ENCODE measurements at regions of chr7 and their contacts with region 1.

Region 1: GRCh38 chr7:117458977-117459583 is 20.7 kb upstream of the CFTR start:
- DNase-seq: peak in 3 of 4 experiments; percentile 38 to 39 (median 39)
- ATAC-seq: peak; percentile 76
- H3K4me3 ChIP-seq: no peak overlapping the region
- H3K27ac ChIP-seq: no peak overlapping the region
- H3K4me1 ChIP-seq: no peaks in the 10 kb centered on the region
- H3K27me3 ChIP-seq: no peaks in the 10 kb centered on the region
- CTCF ChIP-seq: peak; percentile 41 to 67 (median 46); a peak in 4 of 6 replicates
- EP300 ChIP-seq: no peak
- POLR2A ChIP-seq: no peak
- RAD21 ChIP-seq: peak; percentile 75 to 76

Region 2: DNA sequence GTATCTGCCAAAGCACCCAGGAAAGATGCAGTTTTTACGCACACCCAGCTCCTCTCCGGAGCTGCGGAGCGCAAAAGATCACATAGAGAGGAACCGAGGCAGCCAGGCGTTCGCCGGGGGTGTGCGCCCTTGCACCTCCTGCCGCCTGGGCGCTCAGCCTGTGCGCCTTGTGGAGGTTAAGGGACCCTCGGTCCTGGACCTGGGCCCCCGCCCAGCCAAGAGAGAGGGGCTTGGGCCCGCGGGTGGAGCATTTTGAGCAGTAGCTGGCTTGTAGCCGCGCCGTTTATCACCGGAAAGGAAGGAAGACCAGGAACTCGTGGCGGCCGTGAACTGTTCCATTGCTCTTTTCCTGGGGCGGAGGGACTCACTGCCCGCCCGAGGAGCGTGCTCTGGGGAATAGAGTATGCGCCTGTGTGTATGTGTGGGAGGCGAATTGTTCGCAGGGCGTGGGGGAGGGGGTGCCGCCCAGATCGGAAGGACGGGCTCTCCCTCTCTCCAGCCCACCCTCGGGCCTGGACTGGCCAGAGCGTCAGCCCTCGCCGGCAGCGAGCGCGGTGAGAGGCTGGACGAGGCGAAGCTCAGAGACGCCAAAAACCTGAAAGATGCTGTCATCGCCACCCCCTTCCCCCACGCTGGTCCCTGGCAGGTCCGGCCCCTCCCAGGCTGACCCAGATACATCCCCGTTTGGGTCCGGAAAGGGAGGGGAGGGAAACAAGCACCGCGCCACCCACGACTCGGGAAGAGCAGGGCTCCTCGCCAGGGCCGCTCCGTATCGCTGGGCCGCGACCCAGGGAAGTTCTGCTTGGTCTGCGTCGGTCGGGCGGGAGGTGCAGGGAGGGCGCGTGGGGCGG is 135.0 kb before region 1 on chr7:
- CTCF ChIA-PET with region 1: no interaction called
- POLR2A ChIA-PET with region 1: no interaction called
- in situ Hi-C with region 1: no loop called
- intact Hi-C with region 1: no loop called
- DNase-seq: no peak
- ATAC-seq: peak; percentile 52
- H3K4me3 ChIP-seq: no peak overlapping the region
- H3K27ac ChIP-seq: no peak overlapping the region
- H3K4me1 ChIP-seq: peaks cover 0 to 16% of the 10 kb centered on the region in 2 experiments; a peak in 2 of 5 replicates
- H3K27me3 ChIP-seq: peaks cover 43 to 44% of the 10 kb centered on the region in 2 experiments; a peak in 4 of 5 replicates
- CTCF ChIP-seq: no peak
- EP300 ChIP-seq: no peak
- POLR2A ChIP-seq: no peak
- RAD21 ChIP-seq: no peak

Region 3: GRCh38 chr7:117715784-117716445 is 256.8 kb after region 1 on chr7:
- CTCF ChIA-PET with region 1: interaction called, 5 read pairs
- POLR2A ChIA-PET with region 1: no interaction called
- in situ Hi-C with region 1: no loop called
- intact Hi-C with region 1: loop called (anchors 5 kb)
- DNase-seq: peak in 3 of 4 experiments; percentile 29 to 38 (median 31)
- ATAC-seq: peak; percentile 75
- H3K4me3 ChIP-seq: no peak overlapping the region
- H3K27ac ChIP-seq: no peak overlapping the region
- H3K4me1 ChIP-seq: no peaks in the 10 kb centered on the region; a peak in 1 of 5 replicates
- H3K27me3 ChIP-seq: peaks cover 0 to 3% of the 10 kb centered on the region in 2 experiments; a peak in 2 of 5 replicates
- CTCF ChIP-seq: peak; percentile 38 to 63 (median 47)
- EP300 ChIP-seq: no peak
- POLR2A ChIP-seq: no peak
- RAD21 ChIP-seq: peak; percentile 59 to 60

Region 4: DNA sequence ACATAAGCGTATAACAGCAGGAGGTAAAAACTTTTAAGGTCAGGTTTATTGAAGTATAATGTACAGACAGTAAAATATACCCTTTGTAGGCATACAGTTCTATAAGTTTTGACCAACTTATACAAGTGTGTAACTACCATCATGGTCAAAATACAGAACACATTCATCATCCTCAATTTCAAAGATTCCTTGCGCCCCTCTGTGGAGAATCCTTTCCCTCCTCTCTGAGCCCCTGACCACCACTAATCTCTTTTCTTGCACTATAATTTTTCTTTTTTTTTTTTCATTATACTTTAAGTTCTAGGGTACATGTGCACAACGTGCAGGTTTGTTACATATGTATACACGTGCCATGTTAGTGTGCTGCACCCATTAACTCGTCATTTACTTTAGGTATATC is 472.2 kb after region 1 on chr7:
- CTCF ChIA-PET with region 1: no interaction called
- POLR2A ChIA-PET with region 1: no interaction called
- in situ Hi-C with region 1: no loop called
- intact Hi-C with region 1: loop called (anchors 5 kb)
- DNase-seq: no peak
- ATAC-seq: peak; percentile 48; the same call in 2 of the 3 replicates
- H3K4me3 ChIP-seq: no peak overlapping the region
- H3K27ac ChIP-seq: no peak overlapping the region
- H3K4me1 ChIP-seq: no peaks in the 10 kb centered on the region
- H3K27me3 ChIP-seq: no peaks in the 10 kb centered on the region
- CTCF ChIP-seq: peak in 1 of 3 experiments; percentile 38; a peak in 2 of 6 replicates
- EP300 ChIP-seq: no peak
- POLR2A ChIP-seq: no peak
- RAD21 ChIP-seq: peak; percentile 14 to 34; a peak in 1 of 4 replicates

Region 5: GRCh38 chr7:118104812-118105441 is 645.8 kb after region 1 on chr7:
- CTCF ChIA-PET with region 1: no interaction called
- POLR2A ChIA-PET with region 1: no interaction called
- in situ Hi-C with region 1: no loop called
- intact Hi-C with region 1: loop called (anchors 5 kb)
- DNase-seq: peak in 2 of 4 experiments; percentile 12 to 13
- ATAC-seq: peak; percentile 73
- H3K4me3 ChIP-seq: no peak overlapping the region
- H3K27ac ChIP-seq: no peak overlapping the region
- H3K4me1 ChIP-seq: no peaks in the 10 kb centered on the region
- H3K27me3 ChIP-seq: no peaks in the 10 kb centered on the region
- CTCF ChIP-seq: peak; percentile 36 to 61 (median 37); a peak in 3 of 6 replicates
- EP300 ChIP-seq: no peak
- POLR2A ChIP-seq: no peak
- RAD21 ChIP-seq: peak; percentile 73 to 81

Region 6: GRCh38 chr7:118153551-118154177 is 694.6 kb after region 1 on chr7:
- CTCF ChIA-PET with region 1: interaction called, 15 read pairs
- POLR2A ChIA-PET with region 1: no interaction called
- in situ Hi-C with region 1: no loop called
- intact Hi-C with region 1: loop called (anchors 1 kb)
- DNase-seq: peak; percentile 57 to 68 (median 58)
- ATAC-seq: peak; percentile 77
- H3K4me3 ChIP-seq: no peak overlapping the region
- H3K27ac ChIP-seq: no peak overlapping the region
- H3K4me1 ChIP-seq: no peaks in the 10 kb centered on the region
- H3K27me3 ChIP-seq: no peaks in the 10 kb centered on the region
- CTCF ChIP-seq: peak; percentile 57 to 83 (median 57); a peak in 5 of 6 replicates
- EP300 ChIP-seq: no peak
- POLR2A ChIP-seq: no peak
- RAD21 ChIP-seq: peak; percentile 93 to 94

Region 7: DNA sequence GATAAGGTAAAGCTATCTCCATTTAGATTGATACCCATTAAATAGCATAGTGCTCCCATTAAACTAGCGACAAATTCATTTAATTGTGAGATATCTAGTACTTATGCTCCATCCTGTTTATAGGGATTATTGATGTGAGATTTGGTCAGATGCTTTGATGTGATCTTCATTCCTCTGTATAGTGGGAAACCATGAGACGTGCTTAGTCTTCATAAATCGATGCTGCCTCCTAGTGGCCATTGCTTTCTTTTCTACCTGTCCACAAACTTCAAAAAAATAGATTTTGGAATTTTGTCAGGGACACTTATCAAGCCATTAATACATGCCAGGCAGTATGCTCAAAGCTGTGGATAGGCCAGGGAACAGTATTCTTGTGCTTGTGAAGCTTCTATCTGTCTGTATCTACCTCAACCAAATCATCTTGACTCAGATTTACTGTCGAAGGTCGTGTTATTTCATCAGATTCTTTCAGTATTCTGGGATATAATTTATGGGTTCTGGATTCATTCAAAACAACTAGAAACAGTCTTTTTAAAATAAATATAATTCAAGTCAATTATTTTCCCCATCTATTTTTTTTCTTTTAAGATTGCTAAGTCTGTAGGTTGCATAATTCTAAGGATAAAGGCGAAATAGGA is 736.9 kb after region 1 on chr7:
- CTCF ChIA-PET with region 1: interaction called, 8 read pairs
- POLR2A ChIA-PET with region 1: no interaction called
- in situ Hi-C with region 1: no loop called
- intact Hi-C with region 1: loop called (anchors 2 kb)
- DNase-seq: peak; percentile 55 to 82 (median 58)
- ATAC-seq: peak; percentile 89
- H3K4me3 ChIP-seq: no peak overlapping the region
- H3K27ac ChIP-seq: no peak overlapping the region
- H3K4me1 ChIP-seq: no peaks in the 10 kb centered on the region
- H3K27me3 ChIP-seq: no peaks in the 10 kb centered on the region
- CTCF ChIP-seq: peak; percentile 54 to 88 (median 86)
- EP300 ChIP-seq: no peak
- POLR2A ChIP-seq: no peak; the same call in 1 of the 2 replicates
- RAD21 ChIP-seq: peak; percentile 77 to 82

Measured in K562 (cell line).